HCT116 (cell line): ENCODE measurements at regions of chr18 and their contacts with region 1.

Region 1: DNA sequence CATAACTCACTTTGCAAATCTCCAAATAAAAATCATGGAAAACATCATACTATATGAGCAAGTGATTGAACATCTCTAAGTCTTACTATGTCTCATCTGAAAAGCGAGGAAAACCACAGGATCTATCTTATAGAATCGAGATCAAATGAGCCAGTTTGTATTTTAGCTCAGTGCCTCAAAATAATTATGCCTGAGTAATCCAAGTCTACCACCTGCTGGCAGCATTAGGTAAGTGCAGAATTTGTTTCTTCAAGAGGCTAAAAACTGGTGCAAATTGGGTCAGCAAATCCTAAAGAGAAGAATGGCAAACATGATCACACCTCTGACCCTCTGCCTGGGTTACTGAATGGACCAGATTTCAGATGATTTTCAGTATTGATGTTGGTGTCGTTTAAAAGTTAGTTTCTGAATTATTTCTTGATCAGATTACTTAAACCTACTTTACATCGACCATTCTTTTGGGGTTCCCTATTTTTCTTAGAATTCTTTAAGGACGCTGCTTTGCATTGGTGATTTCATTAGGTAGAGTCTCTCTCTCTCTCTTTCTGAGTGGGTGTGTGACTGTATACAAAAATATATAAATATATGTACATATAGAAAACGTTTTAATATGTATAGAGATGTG is 12.7 kb upstream of the FHOD3 start:
- DNase-seq: peak; percentile 60
- ATAC-seq: peak; percentile 74
- H3K4me3 ChIP-seq: no peak overlapping the region
- H3K27ac ChIP-seq: no peak overlapping the region
- H3K4me1 ChIP-seq: no peaks in the 10 kb centered on the region
- H3K27me3 ChIP-seq: 0 out of 2 replicates have a peak, but pooled peaks cover 2% of the 10 kb centered on the region
- CTCF ChIP-seq: peak; percentile 70 to 94 (median 89)
- POLR2A ChIP-seq: no peak
- RAD21 ChIP-seq: peak; percentile 94

Region 2: GRCh38 chr18:35743916-35744315 is 540.9 kb before region 1 on chr18:
- CTCF ChIA-PET with region 1: no interaction called
- POLR2A ChIA-PET with region 1: no interaction called
- RAD21 ChIA-PET with region 1: no interaction called
- intact Hi-C with region 1: no loop called
- DNase-seq: no peak
- ATAC-seq: no peak
- H3K4me3 ChIP-seq: no peak overlapping the region
- H3K27ac ChIP-seq: no peak overlapping the region
- H3K4me1 ChIP-seq: no peaks in the 10 kb centered on the region
- H3K27me3 ChIP-seq: no peaks in the 10 kb centered on the region
- CTCF ChIP-seq: no peak
- POLR2A ChIP-seq: no peak
- RAD21 ChIP-seq: no peak

Region 3: GRCh38 chr18:35756506-35757117 is 528.2 kb before region 1 on chr18:
- CTCF ChIA-PET with region 1: interaction called, 12 read pairs
- POLR2A ChIA-PET with region 1: no interaction called
- RAD21 ChIA-PET with region 1: interaction called in 1 of 2 experiments, 3 read pairs
- intact Hi-C with region 1: loop called (anchors 2 kb)
- DNase-seq: peak; percentile 40
- ATAC-seq: peak; percentile 85
- H3K4me3 ChIP-seq: no peak overlapping the region
- H3K27ac ChIP-seq: no peak overlapping the region
- H3K4me1 ChIP-seq: no peaks in the 10 kb centered on the region
- H3K27me3 ChIP-seq: no peaks in the 10 kb centered on the region; the same call in 1 of the 2 replicates
- CTCF ChIP-seq: peak; percentile 55 to 88 (median 77); a peak in 5 of 6 replicates
- POLR2A ChIP-seq: no peak
- RAD21 ChIP-seq: peak; percentile 91

Region 4: GRCh38 chr18:36015629-36016028 is 269.2 kb before region 1 on chr18:
- CTCF ChIA-PET with region 1: interaction called, 20 read pairs
- POLR2A ChIA-PET with region 1: no interaction called
- RAD21 ChIA-PET with region 1: interaction called in 1 of 2 experiments, 3 read pairs
- intact Hi-C with region 1: loop called (anchors 1 kb)
- DNase-seq: no peak
- ATAC-seq: no peak
- H3K4me3 ChIP-seq: no peak overlapping the region
- H3K27ac ChIP-seq: no peak overlapping the region
- H3K4me1 ChIP-seq: no peaks in the 10 kb centered on the region
- H3K27me3 ChIP-seq: no peaks in the 10 kb centered on the region
- CTCF ChIP-seq: no peak
- POLR2A ChIP-seq: no peak
- RAD21 ChIP-seq: no peak